Dendritic cell treated with granulocyte-macrophage colony-stimulating factor and Interleukin-4, amounts not matched to agents 40 ng/mL and 50 ng/mL, for 4 days (primary cell): ENCODE measurements at regions of chr3 and their contacts with region 1.

Region 1: DNA sequence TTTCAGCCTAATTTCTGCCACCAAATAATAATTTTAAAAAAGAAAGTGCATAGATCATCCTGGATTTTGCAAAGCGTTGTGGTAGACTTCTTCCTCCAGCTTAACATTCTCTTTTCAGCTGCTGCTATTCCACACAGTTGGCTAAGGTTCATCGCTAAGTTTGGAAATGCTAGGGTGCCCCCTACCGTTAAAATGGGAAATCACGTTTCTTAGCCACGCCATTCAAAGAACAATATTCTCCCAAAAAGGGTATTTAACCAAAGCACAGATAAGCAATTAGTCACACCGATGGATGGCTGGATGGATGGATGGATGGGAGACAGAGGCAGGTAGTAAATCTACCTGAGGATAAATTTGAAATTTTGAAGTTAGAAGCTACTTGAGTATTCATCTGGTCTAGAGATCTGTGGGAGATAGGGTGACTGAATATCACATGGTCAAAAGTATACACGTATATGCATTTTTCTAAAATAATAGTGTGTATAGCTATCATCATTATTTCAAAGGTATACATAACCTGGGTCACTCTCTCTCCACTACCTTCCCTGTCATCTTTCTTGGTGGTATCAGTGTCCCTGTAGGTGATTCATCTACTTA is 67.2 kb downstream of the EFHB start:
- H3K4me3 Mint-ChIP-seq: no peak overlapping the region
- H3K27ac Mint-ChIP-seq: no peak overlapping the region
- H3K4me1 Mint-ChIP-seq: no peaks in the 10 kb centered on the region
- H3K27me3 Mint-ChIP-seq: no peaks in the 10 kb centered on the region

Region 2: GRCh38 chr3:18847583-18848197 is 1019.2 kb before region 1 on chr3:
- intact Hi-C with region 1: loop called (anchors 10 kb)
- H3K4me3 Mint-ChIP-seq: no peak overlapping the region
- H3K27ac Mint-ChIP-seq: no peak overlapping the region
- H3K4me1 Mint-ChIP-seq: peaks cover 12% of the 10 kb centered on the region
- H3K27me3 Mint-ChIP-seq: no peaks in the 10 kb centered on the region

Region 3: DNA sequence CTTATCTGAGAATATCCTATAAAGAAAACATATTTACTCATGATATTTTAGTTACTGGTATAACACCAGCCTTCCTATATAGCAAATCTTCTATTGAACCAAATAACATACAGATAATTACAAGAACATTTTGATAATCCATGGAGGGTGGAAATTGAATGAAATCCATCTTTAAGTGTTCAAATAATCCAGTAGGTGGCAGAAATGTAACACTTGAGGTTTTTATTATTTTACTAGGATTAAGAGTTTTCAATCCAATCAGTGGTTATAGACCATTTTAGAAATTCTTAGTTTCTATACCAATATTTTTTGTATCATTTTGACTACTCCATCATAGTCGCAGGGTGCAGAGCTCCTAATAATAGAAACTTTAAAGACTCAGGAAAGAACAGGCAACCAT is 820.4 kb before region 1 on chr3:
- intact Hi-C with region 1: loop called (anchors 2 kb)
- H3K4me3 Mint-ChIP-seq: no peak overlapping the region
- H3K27ac Mint-ChIP-seq: no peak overlapping the region
- H3K4me1 Mint-ChIP-seq: no peaks in the 10 kb centered on the region
- H3K27me3 Mint-ChIP-seq: no peaks in the 10 kb centered on the region

Region 4: DNA sequence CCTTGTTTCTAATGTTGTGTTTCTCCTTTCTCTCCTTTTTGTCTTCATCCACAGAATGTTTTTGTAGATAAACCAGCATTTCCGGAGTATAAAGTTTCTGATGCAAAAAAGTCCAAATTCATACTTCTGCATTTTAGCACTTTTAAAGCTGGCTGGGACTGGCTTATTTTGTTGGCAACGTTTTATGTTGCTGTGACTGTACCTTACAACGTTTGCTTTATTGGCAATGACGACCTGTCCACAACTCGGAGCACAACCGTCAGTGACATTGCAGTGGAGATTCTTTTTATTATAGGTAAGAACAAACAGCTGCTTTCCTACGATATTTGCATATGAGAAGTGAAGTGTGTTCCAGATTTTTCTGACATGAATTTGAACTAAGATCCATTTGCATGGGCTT is 519.2 kb before region 1 on chr3:
- intact Hi-C with region 1: loop called (anchors 2 kb)
- H3K4me3 Mint-ChIP-seq: no peak overlapping the region
- H3K27ac Mint-ChIP-seq: no peak overlapping the region
- H3K4me1 Mint-ChIP-seq: peaks cover 5% of the 10 kb centered on the region
- H3K27me3 Mint-ChIP-seq: no peaks in the 10 kb centered on the region